ENCODE measurements at regions of chr15 and their contacts with region 1.

Region 1: GRCh38 chr15:72783563-72784237 is at the start of gene ADPGK:
- DNase-seq: peak; percentile 92 to 100 (median 97)
- H3K4me3 ChIP-seq: peak within 1 kb of the TSS; percentile 36 to 96
- H3K4me3 Mint-ChIP-seq: peak within 1 kb of the TSS; percentile 95 to 99 (median 97)
- H3K27ac ChIP-seq: peak within 1 kb of the TSS; percentile 87
- H3K27ac Mint-ChIP-seq: peak within 1 kb of the TSS; percentile 90 to 100 (median 98)
- H3K4me1 ChIP-seq: peaks cover 62% of the 10 kb centered on the region
- H3K4me1 Mint-ChIP-seq: peaks cover 44 to 74% (median 56%) of the 10 kb centered on the region in 4 donors
- H3K27me3 ChIP-seq: no peaks in the 10 kb centered on the region
- H3K27me3 Mint-ChIP-seq: no peaks in the 10 kb centered on the region
- total RNA-seq, gene ADPGK: 98.1 to 104 TPM

Region 2: DNA sequence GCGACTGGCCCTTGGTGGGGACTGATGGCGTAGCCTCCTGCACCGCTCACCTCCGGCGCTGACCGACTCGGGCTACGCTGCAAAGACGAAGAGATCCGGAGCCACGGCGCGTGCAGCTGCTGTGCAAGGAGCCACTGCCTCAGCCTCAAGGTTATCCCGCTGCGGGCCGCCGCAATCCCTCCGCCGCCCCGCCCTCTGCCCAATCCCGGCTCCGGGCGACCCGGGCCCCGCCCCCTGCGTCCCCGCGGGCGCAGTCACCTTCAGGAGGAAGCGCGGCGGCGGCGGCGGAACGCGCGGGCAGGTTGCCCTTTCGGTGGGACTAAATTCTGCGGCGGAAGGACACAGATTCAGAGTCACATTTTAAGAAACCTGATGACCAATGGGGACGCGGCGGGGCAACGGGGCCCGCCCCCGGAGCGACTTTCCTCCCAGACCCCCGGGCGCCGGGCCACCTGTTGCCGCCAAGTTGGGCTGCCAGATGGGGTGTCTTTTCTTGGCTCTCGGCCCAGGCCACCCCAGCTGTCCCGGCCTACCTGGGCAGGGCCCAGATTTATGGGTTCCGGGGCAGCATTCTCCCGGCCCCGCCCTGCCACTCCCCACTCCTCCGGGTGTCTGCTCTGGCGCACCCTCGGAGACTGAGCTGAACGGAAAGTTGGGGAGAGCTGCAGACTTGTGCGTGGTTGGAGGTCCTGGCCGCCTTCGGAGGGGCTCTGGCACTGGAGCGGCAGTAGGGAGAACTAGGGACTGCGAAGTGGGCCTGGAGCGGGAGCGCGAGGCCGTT is 552.4 kb before region 1 on chr15 and contains the start of gene PKM:
- CTCF ChIA-PET with region 1: no interaction called
- POLR2A ChIA-PET with region 1: no interaction called
- intact Hi-C with region 1: loop called (anchors 5 kb)
- DNase-seq: peak; percentile 88 to 90 (median 89)
- H3K4me3 ChIP-seq: peak within 1 kb of the TSS; percentile 68 to 92
- H3K4me3 Mint-ChIP-seq: peak within 1 kb of the TSS; percentile 95 to 99 (median 98)
- H3K27ac ChIP-seq: peak within 1 kb of the TSS; percentile 96
- H3K27ac Mint-ChIP-seq: peak within 1 kb of the TSS; percentile 94 to 100 (median 97)
- H3K4me1 ChIP-seq: peaks cover 42% of the 10 kb centered on the region
- H3K4me1 Mint-ChIP-seq: peaks cover 35 to 70% (median 50%) of the 10 kb centered on the region in 4 donors
- H3K27me3 ChIP-seq: no peaks in the 10 kb centered on the region
- H3K27me3 Mint-ChIP-seq: peaks cover 0 to 4% of the 10 kb centered on the region in 2 donors
- total RNA-seq, gene PKM: 378 to 383 TPM

Region 3: DNA sequence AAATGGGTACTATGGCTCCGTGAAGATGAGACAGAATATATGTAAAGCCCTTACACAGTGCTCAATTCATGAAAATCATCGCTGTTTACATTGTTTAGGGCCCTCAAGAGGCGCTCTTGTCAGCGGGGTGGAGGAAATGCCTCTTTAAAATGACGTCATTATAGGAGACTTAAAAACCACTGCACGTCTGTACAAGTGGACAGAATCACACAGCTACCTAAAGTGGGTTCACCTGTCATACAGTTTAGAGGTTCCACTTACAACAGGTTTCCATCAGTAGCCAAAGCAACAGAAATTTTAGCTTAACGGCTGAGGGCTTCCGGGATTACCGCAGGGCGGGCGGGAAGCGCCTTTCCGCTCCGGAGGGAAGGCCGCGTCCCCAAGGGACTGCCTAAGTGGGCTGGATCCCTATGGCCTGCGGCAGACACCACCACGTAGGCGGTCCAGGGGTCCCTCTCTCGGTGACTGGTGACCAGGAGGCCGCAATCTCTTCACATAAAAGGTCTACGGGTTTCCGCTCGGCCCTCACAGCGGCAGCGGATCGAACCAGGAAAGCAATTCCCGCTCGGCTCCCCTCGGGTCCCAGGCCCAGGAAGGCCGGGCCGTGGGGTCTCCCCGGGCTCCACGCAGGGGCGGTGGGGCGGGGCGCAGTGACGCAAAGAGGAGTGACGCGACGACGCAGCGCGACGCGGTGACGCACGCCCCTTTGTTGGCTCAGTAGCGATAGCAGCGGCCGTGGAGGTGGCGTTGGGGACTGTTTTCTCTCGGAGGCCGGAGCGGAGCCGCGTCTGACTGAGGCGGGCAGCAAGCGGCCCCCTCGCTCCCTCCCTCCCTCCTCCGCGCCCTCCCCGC is 309.9 kb before region 1 on chr15 and contains the start of gene ARIH1:
- CTCF ChIA-PET with region 1: no interaction called
- POLR2A ChIA-PET with region 1: interaction called, 8 read pairs
- intact Hi-C with region 1: loop called (anchors 10 kb)
- DNase-seq: peak; percentile 93 to 97 (median 96)
- H3K4me3 ChIP-seq: peak within 1 kb of the TSS; percentile 64 to 78
- H3K4me3 Mint-ChIP-seq: peak within 1 kb of the TSS; percentile 94 to 99 (median 97)
- H3K27ac ChIP-seq: peak within 1 kb of the TSS; percentile 100
- H3K27ac Mint-ChIP-seq: peak within 1 kb of the TSS; percentile 97 to 100 (median 99)
- H3K4me1 ChIP-seq: peaks cover 48% of the 10 kb centered on the region
- H3K4me1 Mint-ChIP-seq: peaks cover 29 to 64% (median 43%) of the 10 kb centered on the region in 4 donors
- H3K27me3 ChIP-seq: no peaks in the 10 kb centered on the region
- H3K27me3 Mint-ChIP-seq: no peaks in the 10 kb centered on the region
- total RNA-seq, gene ARIH1: 203 to 210 TPM

Region 4: DNA sequence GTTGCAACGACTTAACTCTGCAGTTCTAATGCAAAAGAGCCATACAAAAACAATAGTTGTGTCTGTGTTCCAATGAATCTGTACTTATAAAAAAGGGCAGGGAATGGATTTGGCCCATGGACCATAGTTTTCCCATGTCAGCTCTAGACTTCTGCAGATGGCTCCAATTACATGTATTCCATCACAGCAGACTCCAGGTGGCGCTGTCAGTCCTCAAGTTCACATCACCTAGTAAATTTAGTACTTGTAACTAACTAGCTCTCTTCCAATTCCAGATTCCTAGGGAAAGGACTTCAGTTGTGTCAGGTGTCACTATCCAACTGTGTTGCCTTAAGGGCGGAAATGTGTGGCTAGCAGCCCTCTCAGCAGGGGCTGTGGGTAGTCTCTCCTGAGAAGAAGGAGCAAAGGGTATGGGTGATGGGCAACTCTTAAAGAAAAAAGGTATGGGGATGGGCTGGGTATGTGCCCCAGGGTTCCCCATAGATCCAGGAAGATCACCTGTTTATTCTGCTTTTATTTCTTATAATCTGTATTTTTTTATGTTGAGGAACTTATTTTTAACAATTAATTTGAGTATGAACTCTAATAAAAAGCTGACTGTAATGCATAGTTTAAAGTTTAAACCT is 61.5 kb before region 1 on chr15:
- CTCF ChIA-PET with region 1: interaction called, 7 read pairs
- POLR2A ChIA-PET with region 1: no interaction called
- intact Hi-C with region 1: loop called (anchors 1 kb)
- DNase-seq: peak; percentile 40 to 64 (median 60)
- H3K4me3 ChIP-seq: no peak overlapping the region
- H3K4me3 Mint-ChIP-seq: no peak overlapping the region
- H3K27ac ChIP-seq: no peak overlapping the region
- H3K27ac Mint-ChIP-seq: peak overlapping the region in 2 of 7 donors; percentile 27 to 29
- H3K4me1 ChIP-seq: no peaks in the 10 kb centered on the region
- H3K4me1 Mint-ChIP-seq: no peaks in the 10 kb centered on the region
- H3K27me3 ChIP-seq: no peaks in the 10 kb centered on the region
- H3K27me3 Mint-ChIP-seq: no peaks in the 10 kb centered on the region

Region 5: GRCh38 chr15:72796515-72797337 is 13.0 kb after region 1 on chr15:
- CTCF ChIA-PET with region 1: interaction called, 26 read pairs
- POLR2A ChIA-PET with region 1: interaction called, 4 read pairs
- intact Hi-C with region 1: no loop called
- DNase-seq: peak in 4 of 5 donors; percentile 28 to 47 (median 36)
- H3K4me3 ChIP-seq: peak overlapping the region in 1 of 2 donors; percentile 57
- H3K4me3 Mint-ChIP-seq: peak overlapping the region; percentile 84 to 91 (median 87)
- H3K27ac ChIP-seq: no peak overlapping the region
- H3K27ac Mint-ChIP-seq: peak overlapping the region in 6 of 7 donors; percentile 43 to 87 (median 82)
- H3K4me1 ChIP-seq: peaks cover 4% of the 10 kb centered on the region
- H3K4me1 Mint-ChIP-seq: peaks cover 5 to 20% (median 7%) of the 10 kb centered on the region in 4 donors
- H3K27me3 ChIP-seq: no peaks in the 10 kb centered on the region
- H3K27me3 Mint-ChIP-seq: peaks cover 10 to 11% of the 10 kb centered on the region in 2 donors

Region 6: DNA sequence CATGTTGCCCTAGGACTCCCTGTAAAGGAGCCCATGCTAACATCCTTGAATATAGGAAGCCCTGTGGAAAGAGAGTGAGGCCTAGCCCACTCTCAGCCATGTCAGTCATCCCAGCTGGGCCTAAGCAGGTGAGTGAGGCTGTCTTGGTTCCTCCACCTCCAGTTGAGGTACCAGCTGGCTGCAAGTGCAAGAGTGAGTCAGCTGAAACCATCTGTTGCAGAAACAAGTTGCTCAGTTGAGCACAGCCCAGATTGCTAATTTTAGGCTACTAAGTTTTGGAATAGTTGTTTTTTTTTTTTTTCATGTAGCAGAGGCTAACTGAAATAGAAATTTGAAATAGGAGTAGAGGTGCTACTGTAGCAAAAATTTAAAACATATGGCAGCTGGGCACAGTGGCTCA is 43.5 kb after region 1 on chr15:
- CTCF ChIA-PET with region 1: no interaction called
- POLR2A ChIA-PET with region 1: no interaction called
- intact Hi-C with region 1: no loop called
- DNase-seq: no peak
- H3K4me3 ChIP-seq: no peak overlapping the region
- H3K4me3 Mint-ChIP-seq: no peak overlapping the region
- H3K27ac ChIP-seq: no peak overlapping the region
- H3K27ac Mint-ChIP-seq: no peak overlapping the region
- H3K4me1 ChIP-seq: no peaks in the 10 kb centered on the region
- H3K4me1 Mint-ChIP-seq: no peaks in the 10 kb centered on the region
- H3K27me3 ChIP-seq: no peaks in the 10 kb centered on the region
- H3K27me3 Mint-ChIP-seq: peaks cover 11 to 20% of the 10 kb centered on the region in 2 donors

Region 7: DNA sequence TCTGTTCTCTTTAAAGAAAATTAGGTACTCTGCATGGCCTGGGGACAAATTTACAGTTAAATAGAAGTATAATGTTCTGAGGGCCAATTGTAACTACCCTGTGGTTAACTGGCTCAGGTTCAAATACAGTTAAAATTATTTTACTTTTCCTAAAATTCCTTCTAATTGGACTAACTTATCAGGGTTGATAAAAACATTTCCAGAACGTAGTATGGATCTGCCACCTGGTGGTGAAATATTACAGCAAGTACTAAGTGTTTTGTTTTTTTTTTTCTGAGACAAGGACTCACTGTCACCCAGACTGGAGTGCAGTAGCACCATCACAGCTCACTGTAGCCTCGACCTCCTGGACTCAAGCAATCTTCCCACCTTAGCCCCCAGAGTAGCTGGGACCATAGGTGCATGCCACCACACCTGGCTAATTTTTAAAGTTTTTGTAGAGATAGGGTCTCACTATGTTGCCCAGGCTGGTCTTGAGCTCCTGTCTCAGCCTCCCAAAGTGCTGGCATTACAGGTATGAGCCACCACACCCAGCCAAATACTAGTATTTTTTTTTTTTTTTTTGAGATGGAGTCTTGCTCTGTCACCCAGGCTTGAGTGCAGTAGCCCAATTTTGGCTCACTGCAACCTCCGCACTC is 297.7 kb after region 1 on chr15:
- CTCF ChIA-PET with region 1: interaction called, 7 read pairs
- POLR2A ChIA-PET with region 1: interaction called, 3 read pairs
- intact Hi-C with region 1: loop called (anchors 1 kb)
- DNase-seq: peak in 4 of 5 donors; percentile 40 to 51 (median 44)
- H3K4me3 ChIP-seq: no peak overlapping the region
- H3K4me3 Mint-ChIP-seq: no peak overlapping the region
- H3K27ac ChIP-seq: no peak overlapping the region
- H3K27ac Mint-ChIP-seq: no peak overlapping the region
- H3K4me1 ChIP-seq: no peaks in the 10 kb centered on the region
- H3K4me1 Mint-ChIP-seq: peaks cover 0 to 4% (median under 1%) of the 10 kb centered on the region in 4 donors
- H3K27me3 ChIP-seq: no peaks in the 10 kb centered on the region
- H3K27me3 Mint-ChIP-seq: no peaks in the 10 kb centered on the region